ENCODE measurements at regions of chr3 and their contacts with region 1.

Region 1: DNA sequence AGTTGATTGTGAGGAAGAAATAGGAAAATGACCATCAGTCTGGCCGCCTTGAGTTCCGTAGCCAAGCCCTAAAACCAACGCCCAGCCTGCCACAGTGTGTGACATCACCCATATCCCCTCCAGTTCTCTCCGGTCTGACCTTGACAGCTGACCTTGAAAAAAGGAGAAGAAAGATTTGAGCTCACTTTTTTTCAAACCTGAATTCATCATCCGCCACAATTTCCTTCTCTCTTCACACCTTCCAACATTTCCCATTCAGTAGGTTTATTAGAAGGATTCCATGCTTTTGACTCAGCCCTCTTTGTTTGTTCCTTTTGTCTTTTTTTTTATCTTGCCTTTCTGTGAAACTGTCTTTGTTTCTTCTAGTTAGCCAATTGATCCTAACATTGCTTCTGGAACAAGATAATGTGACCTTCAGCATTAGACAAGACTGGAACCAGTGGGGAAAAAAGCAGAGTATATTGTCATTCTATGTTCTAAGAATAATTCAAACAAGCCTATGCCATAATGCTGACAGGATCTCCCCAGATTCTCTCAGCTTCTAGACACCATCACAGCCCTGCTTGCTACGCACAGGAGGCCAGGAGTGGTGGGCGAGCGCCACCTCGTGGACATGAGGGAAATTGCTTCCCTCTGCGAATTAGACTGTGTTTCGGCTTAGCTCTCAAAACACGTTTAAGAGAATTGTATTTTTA is 283.1 kb downstream of the FGF12 start:
- DNase-seq: peak; percentile 59
- CTCF ChIP-seq: peak; percentile 100

Region 2: DNA sequence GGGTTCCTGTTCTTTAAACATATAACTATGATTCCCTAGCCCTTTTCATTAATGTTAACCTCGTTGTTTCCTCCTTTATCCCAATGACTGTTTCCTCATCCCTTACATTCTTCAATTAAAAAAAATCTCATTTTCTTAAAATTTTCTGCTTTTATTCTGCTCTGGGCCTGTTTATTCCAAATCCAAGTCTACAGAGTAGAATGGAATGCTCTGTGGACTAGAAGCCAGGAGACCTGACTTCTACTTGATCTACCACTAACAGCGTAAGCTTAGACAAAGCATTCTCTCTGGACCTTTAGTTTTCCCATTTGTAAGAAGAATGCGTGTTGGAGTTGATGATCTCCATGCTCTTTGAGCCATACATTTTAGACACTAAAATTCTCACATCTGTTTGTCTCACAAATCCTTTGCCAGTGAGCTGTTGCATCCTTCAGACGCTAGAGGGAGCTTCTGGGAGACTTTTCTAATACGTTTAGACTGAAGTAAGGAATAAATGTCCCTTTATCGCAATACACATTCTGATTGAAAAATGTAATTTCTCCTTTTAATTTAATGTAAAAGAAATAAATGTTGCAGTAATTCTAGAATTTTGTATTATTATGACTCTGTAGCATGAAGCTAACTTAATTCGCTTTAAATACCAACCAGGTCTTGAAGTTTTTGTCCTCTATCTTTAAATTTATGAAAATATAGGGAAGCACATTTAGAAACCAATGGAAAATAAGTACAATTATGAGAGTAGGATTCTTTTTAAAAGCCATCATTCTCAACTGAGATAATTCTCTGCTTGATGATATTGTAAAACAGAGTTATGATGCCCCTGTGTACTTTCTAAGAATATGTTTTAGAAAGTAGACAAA is 1560.0 kb before region 1 on chr3:
- CTCF ChIA-PET with region 1: interaction called, 18 read pairs
- POLR2A ChIA-PET with region 1: no interaction called
- DNase-seq: peak; percentile 40
- CTCF ChIP-seq: peak; percentile 88

Region 3: DNA sequence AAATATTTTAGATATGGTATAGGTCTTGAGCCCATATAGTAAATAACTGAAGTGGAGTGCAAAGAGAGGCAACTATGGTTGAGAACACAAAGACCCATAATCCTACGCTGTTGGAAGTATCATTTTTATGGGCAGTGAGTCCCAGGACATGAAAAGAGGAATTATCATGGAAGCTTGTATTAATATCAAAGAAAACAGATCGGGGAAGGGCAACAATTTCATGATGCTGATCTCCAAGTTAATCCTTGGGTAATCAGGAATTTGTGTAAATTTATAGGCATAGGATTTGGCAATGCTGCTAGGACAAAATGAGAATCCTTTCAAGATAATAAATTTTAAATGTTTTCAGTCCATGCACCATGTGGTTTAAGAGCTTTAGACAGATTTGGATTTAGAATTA is 1023.5 kb before region 1 on chr3:
- CTCF ChIA-PET with region 1: interaction called, 12 read pairs
- POLR2A ChIA-PET with region 1: no interaction called
- DNase-seq: no peak
- CTCF ChIP-seq: no peak

Region 4: GRCh38 chr3:192423003-192423349 is 21.3 kb before region 1 on chr3:
- CTCF ChIA-PET with region 1: interaction called, 20 read pairs
- POLR2A ChIA-PET with region 1: no interaction called
- DNase-seq: no peak
- CTCF ChIP-seq: no peak

Region 5: DNA sequence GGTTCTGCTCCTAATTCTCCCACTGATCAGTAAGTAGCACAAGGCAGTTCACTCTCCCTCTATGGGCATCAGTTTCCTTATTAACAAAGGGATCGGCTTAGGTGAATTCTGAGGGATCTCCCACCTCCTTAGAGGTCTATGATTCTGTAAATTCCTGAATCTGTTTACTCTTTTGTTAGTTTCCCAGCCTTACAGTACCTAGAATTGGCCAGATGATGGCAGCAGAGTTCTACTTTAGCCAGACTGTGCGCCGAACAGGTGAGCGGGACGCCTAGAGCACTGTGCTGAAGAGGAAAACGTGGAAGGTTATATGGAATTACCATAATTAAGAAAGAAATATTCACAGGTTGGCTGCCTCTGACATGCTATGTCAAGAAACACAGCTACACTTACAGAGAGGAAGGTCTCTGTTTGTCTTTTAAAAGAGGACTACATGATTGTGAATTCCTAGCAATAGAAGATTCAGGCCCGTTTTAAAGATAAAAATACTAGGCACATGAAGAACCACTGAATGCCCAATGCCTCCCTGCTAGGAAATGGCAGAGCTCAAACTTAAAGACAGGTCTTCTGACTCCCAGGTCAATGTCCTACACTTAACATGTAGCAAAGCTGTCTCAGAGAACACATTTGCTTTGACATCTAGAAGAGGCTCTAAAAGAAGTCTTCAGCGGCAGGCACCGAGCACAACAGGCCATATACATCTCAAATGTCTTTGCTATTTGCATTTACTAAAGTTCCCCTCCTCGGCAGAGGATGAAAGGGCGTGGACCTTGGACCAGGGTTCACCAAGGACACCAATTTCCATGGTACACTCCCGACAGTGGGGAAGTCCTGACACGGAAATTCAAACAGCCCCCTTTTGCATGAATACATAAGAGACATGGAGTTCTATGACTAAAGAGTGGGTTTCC is 23.2 kb after region 1 on chr3:
- CTCF ChIA-PET with region 1: interaction called, 15 read pairs
- POLR2A ChIA-PET with region 1: no interaction called
- DNase-seq: peak; percentile 33
- CTCF ChIP-seq: peak; percentile 86

Measured in GM10248 (cell line).